Body of pancreas (tissue), 4 donors: ENCODE measurements at regions of chr11 and their contacts with region 1.

Region 1: DNA sequence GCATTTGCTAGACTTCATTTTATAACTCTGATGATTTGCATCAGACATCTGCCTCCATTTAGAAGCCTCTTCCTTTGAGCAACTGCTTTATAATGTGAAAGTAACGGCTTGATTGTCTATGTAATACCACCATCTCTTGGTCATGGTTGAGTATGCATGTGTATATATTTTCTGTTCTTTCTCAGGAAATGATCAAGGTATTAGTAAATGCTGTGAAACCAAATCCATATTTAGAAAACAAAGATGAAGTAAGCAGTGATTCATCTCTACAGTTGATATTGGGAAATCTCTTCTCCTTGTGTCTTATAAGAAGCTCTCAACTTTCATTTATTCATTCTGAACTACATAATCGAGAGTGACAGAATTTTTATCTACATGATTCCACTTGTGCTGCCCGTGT is 104.6 kb upstream of the ANO3 start:
- DNase-seq: no peak
- ATAC-seq: peak; percentile 55
- H3K4me3 ChIP-seq: no peak overlapping the region
- H3K27ac ChIP-seq: no peak overlapping the region
- H3K4me1 ChIP-seq: no peaks in the 10 kb centered on the region
- H3K27me3 ChIP-seq: no peaks in the 10 kb centered on the region
- CTCF ChIP-seq: peak in 6 of 7 experiments; percentile 17 to 76 (median 54)
- POLR2A ChIP-seq: no peak

Region 2: DNA sequence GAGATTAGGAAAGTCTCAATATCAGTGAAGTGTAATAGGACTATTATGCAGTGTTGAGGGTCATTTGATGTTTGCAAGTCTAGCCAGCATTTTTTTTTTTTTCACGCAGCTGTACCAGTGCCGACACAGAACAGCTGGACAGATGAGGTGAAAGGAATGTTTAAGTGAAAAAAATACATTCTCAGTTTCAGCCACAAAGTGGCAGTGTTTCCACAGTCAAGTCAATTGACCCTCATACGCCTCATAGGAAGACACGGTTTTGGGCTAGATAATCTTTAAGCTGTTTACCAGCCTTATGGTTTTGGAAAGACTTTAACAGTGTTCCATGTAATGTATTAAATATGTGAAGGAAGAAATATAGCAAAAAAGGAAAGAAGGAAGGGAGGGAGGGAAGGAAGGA is 245.3 kb before region 1 on chr11:
- intact Hi-C with region 1: loop called (anchors 5 kb)
- DNase-seq: peak in 2 of 4 donors; percentile 7 to 33
- ATAC-seq: peak; percentile 75
- H3K4me3 ChIP-seq: no peak overlapping the region
- H3K27ac ChIP-seq: no peak overlapping the region
- H3K4me1 ChIP-seq: no peaks in the 10 kb centered on the region
- H3K27me3 ChIP-seq: no peaks in the 10 kb centered on the region
- CTCF ChIP-seq: peak in 6 of 7 experiments; percentile 43 to 78 (median 71)
- POLR2A ChIP-seq: no peak

Region 3: DNA sequence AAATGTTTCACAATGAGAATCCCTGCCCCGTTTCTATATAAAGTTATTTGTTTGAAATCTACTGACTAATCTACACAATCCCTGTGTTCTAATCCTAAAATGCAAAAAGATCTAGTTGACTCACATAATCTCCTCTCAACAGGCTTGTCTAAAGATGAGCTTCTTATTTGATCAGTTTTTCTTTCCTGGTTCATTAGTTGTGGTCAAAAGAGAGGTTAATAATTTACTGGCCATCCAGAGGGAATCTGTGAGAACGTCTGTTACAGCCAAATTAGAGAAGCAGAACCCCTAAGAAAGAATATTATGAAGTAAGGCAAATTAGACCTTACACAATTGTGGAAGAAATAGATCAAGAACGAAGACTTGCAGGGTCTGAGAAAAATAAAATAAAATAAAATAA is 69.0 kb before region 1 on chr11:
- intact Hi-C with region 1: no loop called
- DNase-seq: no peak
- ATAC-seq: no peak
- H3K4me3 ChIP-seq: no peak overlapping the region
- H3K27ac ChIP-seq: no peak overlapping the region
- H3K4me1 ChIP-seq: no peaks in the 10 kb centered on the region
- H3K27me3 ChIP-seq: no peaks in the 10 kb centered on the region
- CTCF ChIP-seq: no peak
- POLR2A ChIP-seq: no peak

Region 4: DNA sequence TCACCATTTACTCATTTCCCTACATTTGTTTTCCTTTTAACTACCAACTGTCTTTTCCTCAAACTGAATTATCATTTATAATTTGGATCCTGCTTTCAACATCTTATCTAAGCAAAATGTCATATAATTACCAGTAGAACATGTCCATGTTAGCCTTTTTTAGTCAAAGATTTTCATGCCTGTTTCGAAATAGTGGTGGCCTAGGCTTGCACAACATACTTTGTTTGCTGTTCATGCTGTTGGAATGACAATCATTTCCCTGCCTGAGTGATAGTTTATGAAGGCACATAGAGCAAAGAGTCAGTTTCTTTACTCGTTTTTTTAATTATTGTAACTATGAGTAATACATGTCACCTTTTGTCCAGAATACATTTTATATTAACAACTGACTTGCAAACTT is 39.7 kb before region 1 on chr11:
- intact Hi-C with region 1: no loop called
- DNase-seq: peak in 2 of 4 donors; percentile 7 to 11
- ATAC-seq: no peak
- H3K4me3 ChIP-seq: no peak overlapping the region
- H3K27ac ChIP-seq: peak overlapping the region in 1 of 4 donors; percentile 50
- H3K4me1 ChIP-seq: no peaks in the 10 kb centered on the region
- H3K27me3 ChIP-seq: no peaks in the 10 kb centered on the region
- CTCF ChIP-seq: no peak
- POLR2A ChIP-seq: no peak

Region 5: DNA sequence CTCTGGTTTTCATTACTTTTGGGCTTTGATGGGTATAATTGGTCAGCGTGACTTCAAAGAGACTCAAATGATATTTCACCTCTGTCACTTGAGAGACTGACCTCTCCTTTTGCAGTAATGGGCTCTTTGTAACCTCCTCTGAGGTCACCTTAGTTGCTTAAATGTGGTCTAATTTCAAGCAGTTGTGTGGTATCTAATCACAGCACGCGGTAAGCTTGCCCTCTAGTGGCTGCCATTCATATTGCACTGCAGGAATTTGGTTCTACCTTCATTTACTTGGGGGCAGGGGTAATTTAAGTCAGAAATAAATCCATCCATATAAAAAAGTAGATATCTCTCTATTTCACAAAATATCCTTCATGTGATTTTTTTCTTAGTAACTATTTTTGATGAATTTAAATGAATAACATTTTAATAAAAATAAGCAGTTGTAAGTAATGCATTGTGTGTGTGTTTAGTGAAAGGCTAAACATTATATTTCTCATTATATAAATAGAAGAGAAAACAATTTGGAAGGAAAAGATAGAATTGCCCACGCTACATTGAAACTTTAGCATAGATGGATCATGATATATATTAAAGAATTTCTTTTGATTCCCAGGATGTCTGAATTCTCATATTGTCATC is 49.6 kb after region 1 on chr11:
- intact Hi-C with region 1: no loop called
- DNase-seq: peak; percentile 41 to 66 (median 58)
- ATAC-seq: peak; percentile 77
- H3K4me3 ChIP-seq: no peak overlapping the region
- H3K27ac ChIP-seq: no peak overlapping the region
- H3K4me1 ChIP-seq: no peaks in the 10 kb centered on the region
- H3K27me3 ChIP-seq: no peaks in the 10 kb centered on the region
- CTCF ChIP-seq: peak; percentile 81 to 95 (median 88)
- POLR2A ChIP-seq: no peak